Mammary epithelial cell (primary cell): ENCODE measurements at regions of chr14 and their contacts with region 1.

Region 1: GRCh38 chr14:95577067-95577800 is 42.4 kb downstream of the GLRX5 start:
- DNase-seq: no peak
- H3K4me3 ChIP-seq: no peak overlapping the region
- H3K27ac ChIP-seq: no peak overlapping the region
- H3K4me1 ChIP-seq: no peaks in the 10 kb centered on the region
- H3K27me3 ChIP-seq: peaks cover 3% of the 10 kb centered on the region
- CTCF ChIP-seq: no peak

Region 2: DNA sequence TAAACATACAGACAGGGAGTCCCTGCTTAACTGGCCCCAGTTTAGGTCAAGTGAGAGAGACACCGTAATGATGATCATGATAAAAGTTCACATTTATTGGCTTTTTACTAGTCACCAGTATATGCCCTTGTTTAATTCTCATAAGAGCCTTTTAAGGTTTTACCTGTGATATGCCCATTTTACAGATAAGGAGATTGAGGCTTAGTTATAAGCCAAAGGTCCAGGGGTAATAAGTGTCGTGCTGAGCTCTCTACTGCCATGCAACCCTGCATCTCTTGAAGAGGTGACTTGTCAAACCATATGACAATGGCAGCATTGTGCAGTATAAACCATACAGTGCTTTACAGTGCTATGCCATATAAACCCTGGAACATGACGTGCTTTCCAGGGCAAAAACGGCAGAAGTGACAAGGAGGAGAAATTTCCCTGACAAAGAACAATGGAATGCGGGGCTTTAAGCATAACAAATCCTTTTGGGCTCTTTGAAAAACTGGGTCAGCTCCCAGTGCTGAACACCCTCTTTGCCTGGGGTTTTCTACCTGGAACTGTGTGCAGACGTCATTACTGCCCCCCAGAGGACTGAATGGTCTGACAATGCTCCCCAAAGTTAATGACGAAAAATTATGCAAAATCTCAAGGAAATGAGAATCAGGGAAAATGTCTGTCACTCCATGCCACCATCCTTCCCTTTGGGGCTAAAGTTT is 402.3 kb after region 1 on chr14:
- CTCF ChIA-PET with region 1: no interaction called
- dilution Hi-C with region 1: loop called (anchors 10 kb)
- in situ Hi-C with region 1: no loop called
- intact Hi-C with region 1: no loop called
- DNase-seq: no peak
- H3K4me3 ChIP-seq: no peak overlapping the region
- H3K27ac ChIP-seq: no peak overlapping the region
- H3K4me1 ChIP-seq: no peaks in the 10 kb centered on the region
- H3K27me3 ChIP-seq: no peaks in the 10 kb centered on the region
- CTCF ChIP-seq: peak; percentile 5 to 11